HCT116 (cell line): ENCODE measurements at regions of chr11 and their contacts with region 1.

Region 1: GRCh38 chr11:125874556-125875124 is 12.8 kb upstream of the HYLS1 start:
- DNase-seq: peak; percentile 44
- ATAC-seq: peak; percentile 96
- H3K4me3 ChIP-seq: no peak overlapping the region
- H3K27ac ChIP-seq: no peak overlapping the region
- H3K4me1 ChIP-seq: no peaks in the 10 kb centered on the region
- H3K27me3 ChIP-seq: no peaks in the 10 kb centered on the region
- CTCF ChIP-seq: peak; percentile 71 to 85 (median 80)
- POLR2A ChIP-seq: no peak
- RAD21 ChIP-seq: peak; percentile 90

Region 2: DNA sequence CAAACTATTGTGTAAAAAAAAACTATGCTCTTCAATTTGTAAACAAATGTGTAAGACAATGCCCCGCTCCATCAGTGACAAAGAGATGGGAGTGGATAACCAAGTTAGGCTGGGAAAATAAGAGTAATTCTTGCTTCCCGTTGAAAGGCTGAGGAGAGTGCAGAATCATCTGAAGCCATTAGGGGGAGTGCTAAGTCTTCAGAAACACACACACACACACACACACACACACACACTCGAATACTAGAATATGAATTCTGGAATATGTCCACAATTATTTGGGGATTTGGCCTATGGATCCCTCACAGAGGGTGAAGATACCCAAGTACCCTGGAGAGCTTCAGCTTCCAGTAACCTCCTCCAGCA is 1037.2 kb before region 1 on chr11:
- CTCF ChIA-PET with region 1: no interaction called
- POLR2A ChIA-PET with region 1: no interaction called
- RAD21 ChIA-PET with region 1: no interaction called
- intact Hi-C with region 1: loop called (anchors 5 kb)
- DNase-seq: peak; percentile 72
- ATAC-seq: peak; percentile 84
- H3K4me3 ChIP-seq: no peak overlapping the region
- H3K27ac ChIP-seq: no peak overlapping the region
- H3K4me1 ChIP-seq: peaks cover 2 to 4% of the 10 kb centered on the region in 2 experiments; a peak in 3 of 4 replicates
- H3K27me3 ChIP-seq: 0 out of 2 replicates have a peak, but pooled peaks cover 13% of the 10 kb centered on the region
- CTCF ChIP-seq: peak; percentile 56 to 72 (median 72)
- POLR2A ChIP-seq: no peak
- RAD21 ChIP-seq: peak; percentile 77

Region 3: GRCh38 chr11:125345421-125346178 is 529.0 kb before region 1 on chr11:
- CTCF ChIA-PET with region 1: no interaction called
- POLR2A ChIA-PET with region 1: no interaction called
- RAD21 ChIA-PET with region 1: no interaction called
- intact Hi-C with region 1: loop called (anchors 5 kb)
- DNase-seq: no peak
- ATAC-seq: peak; percentile 84
- H3K4me3 ChIP-seq: no peak overlapping the region
- H3K27ac ChIP-seq: no peak overlapping the region
- H3K4me1 ChIP-seq: peaks cover 0 to 2% of the 10 kb centered on the region in 2 experiments; a peak in 1 of 4 replicates
- H3K27me3 ChIP-seq: no peaks in the 10 kb centered on the region
- CTCF ChIP-seq: peak; percentile 83 to 92 (median 91)
- POLR2A ChIP-seq: no peak
- RAD21 ChIP-seq: peak; percentile 72

Region 4: DNA sequence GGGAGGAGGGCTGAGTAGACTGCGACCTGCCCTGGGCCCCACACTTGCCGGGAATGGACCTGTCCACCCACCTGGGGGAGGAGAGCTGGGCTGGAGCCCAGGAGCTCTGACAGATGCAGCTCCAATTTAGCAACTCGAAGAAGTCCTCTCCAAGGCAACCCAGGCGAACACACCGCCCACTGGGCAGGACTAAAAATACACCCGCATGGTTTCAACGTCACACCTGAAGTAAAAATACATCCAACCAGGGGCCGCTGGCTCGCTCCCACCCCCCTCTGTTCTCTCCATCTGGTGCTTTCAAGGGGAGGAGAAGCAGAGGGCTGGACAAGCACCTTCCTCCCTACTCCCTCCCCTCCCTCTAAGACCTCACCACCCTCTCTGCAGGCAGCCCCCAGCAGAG is 498.5 kb before region 1 on chr11:
- CTCF ChIA-PET with region 1: no interaction called
- POLR2A ChIA-PET with region 1: no interaction called
- RAD21 ChIA-PET with region 1: no interaction called
- intact Hi-C with region 1: no loop called
- DNase-seq: no peak
- ATAC-seq: peak; percentile 58
- H3K4me3 ChIP-seq: no peak overlapping the region
- H3K27ac ChIP-seq: no peak overlapping the region
- H3K4me1 ChIP-seq: no peaks in the 10 kb centered on the region
- H3K27me3 ChIP-seq: peaks cover 54% of the 10 kb centered on the region
- CTCF ChIP-seq: no peak
- POLR2A ChIP-seq: no peak
- RAD21 ChIP-seq: no peak

Region 5: DNA sequence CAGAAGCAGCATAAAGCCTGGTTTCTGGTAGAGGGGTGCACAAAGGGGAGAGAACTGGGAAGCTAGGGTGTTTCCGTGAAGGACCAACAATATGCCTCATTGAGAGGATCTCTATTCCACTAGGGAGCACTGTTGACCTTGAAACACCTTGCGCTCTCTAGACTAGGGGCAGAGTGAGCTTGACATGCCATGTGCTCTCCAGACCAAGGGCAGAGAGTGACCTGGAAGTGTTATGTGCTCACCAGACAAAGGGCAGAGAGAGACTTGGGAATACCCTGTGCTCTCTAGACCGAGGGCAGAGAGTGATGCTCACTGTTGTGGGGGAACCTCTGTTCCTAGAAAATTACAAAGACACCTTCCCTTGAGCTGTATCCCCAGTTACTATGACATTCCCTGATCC is 320.6 kb before region 1 on chr11:
- CTCF ChIA-PET with region 1: no interaction called
- POLR2A ChIA-PET with region 1: no interaction called
- RAD21 ChIA-PET with region 1: interaction called in 1 of 2 experiments, 3 read pairs
- intact Hi-C with region 1: loop called (anchors 1 kb)
- DNase-seq: peak; percentile 13
- ATAC-seq: peak; percentile 85
- H3K4me3 ChIP-seq: no peak overlapping the region
- H3K27ac ChIP-seq: no peak overlapping the region
- H3K4me1 ChIP-seq: no peaks in the 10 kb centered on the region
- H3K27me3 ChIP-seq: no peaks in the 10 kb centered on the region
- CTCF ChIP-seq: peak in 2 of 3 experiments; percentile 21 to 36; a peak in 2 of 6 replicates
- POLR2A ChIP-seq: no peak
- RAD21 ChIP-seq: peak; percentile 58

Region 6: DNA sequence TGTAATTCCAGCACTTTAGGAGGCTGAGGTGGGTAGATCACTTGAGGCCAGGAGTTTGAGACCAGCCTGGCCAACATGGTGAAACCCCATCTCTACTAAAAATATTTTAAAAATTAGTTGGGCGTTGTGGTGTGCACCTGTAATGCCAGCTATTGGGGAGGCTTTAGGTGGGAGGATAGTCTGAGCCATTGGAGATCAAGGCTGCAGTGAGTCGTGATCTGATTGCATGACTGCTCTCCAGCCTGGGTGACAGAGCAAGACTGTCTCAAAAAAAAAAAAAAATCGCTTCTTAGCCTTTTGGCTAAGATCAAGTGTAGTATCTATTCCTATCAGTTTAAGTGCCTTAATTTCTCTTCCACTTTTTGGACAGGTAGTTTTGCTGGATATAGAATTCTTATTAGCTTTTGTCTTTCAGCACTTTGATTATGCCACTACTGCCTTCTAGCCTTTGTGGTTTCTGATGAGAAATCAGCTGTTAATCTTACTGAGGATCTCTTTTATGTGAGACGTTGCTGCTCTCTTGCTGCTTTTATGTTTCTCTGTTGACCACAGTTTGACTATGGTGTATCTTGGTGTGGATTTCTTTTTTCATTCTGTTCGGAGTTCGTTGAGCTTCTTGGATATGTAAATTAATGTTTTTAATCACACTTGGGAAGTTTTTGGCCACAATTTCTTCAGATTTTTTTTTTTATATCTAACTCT is 225.0 kb before region 1 on chr11:
- CTCF ChIA-PET with region 1: no interaction called
- POLR2A ChIA-PET with region 1: no interaction called
- RAD21 ChIA-PET with region 1: no interaction called
- intact Hi-C with region 1: no loop called
- DNase-seq: no peak
- ATAC-seq: no peak
- H3K4me3 ChIP-seq: no peak overlapping the region
- H3K27ac ChIP-seq: no peak overlapping the region
- H3K4me1 ChIP-seq: no peaks in the 10 kb centered on the region
- H3K27me3 ChIP-seq: no peaks in the 10 kb centered on the region
- CTCF ChIP-seq: no peak
- POLR2A ChIP-seq: no peak
- RAD21 ChIP-seq: no peak

Region 7: GRCh38 chr11:125724125-125724524 is 150.5 kb before region 1 on chr11:
- CTCF ChIA-PET with region 1: no interaction called
- POLR2A ChIA-PET with region 1: no interaction called
- RAD21 ChIA-PET with region 1: no interaction called
- intact Hi-C with region 1: loop called (anchors 1 kb)
- DNase-seq: peak; percentile 12
- ATAC-seq: peak; percentile 82
- H3K4me3 ChIP-seq: no peak overlapping the region
- H3K27ac ChIP-seq: no peak overlapping the region
- H3K4me1 ChIP-seq: no peaks in the 10 kb centered on the region
- H3K27me3 ChIP-seq: peaks cover 59% of the 10 kb centered on the region
- CTCF ChIP-seq: peak; percentile 33 to 48 (median 34); a peak in 4 of 6 replicates
- POLR2A ChIP-seq: no peak
- RAD21 ChIP-seq: peak; percentile 51

Region 8: GRCh38 chr11:126080161-126080941 is 205.7 kb after region 1 on chr11:
- CTCF ChIA-PET with region 1: no interaction called
- POLR2A ChIA-PET with region 1: no interaction called
- RAD21 ChIA-PET with region 1: no interaction called
- intact Hi-C with region 1: no loop called
- DNase-seq: no peak
- ATAC-seq: peak; percentile 45
- H3K4me3 ChIP-seq: no peak overlapping the region
- H3K27ac ChIP-seq: no peak overlapping the region
- H3K4me1 ChIP-seq: peaks cover 0 to 18% of the 10 kb centered on the region in 2 experiments; a peak in 3 of 4 replicates
- H3K27me3 ChIP-seq: no peaks in the 10 kb centered on the region
- CTCF ChIP-seq: no peak
- POLR2A ChIP-seq: no peak
- RAD21 ChIP-seq: no peak